ENCODE measurements at regions of chr6 and their contacts with region 1.

Region 1: DNA sequence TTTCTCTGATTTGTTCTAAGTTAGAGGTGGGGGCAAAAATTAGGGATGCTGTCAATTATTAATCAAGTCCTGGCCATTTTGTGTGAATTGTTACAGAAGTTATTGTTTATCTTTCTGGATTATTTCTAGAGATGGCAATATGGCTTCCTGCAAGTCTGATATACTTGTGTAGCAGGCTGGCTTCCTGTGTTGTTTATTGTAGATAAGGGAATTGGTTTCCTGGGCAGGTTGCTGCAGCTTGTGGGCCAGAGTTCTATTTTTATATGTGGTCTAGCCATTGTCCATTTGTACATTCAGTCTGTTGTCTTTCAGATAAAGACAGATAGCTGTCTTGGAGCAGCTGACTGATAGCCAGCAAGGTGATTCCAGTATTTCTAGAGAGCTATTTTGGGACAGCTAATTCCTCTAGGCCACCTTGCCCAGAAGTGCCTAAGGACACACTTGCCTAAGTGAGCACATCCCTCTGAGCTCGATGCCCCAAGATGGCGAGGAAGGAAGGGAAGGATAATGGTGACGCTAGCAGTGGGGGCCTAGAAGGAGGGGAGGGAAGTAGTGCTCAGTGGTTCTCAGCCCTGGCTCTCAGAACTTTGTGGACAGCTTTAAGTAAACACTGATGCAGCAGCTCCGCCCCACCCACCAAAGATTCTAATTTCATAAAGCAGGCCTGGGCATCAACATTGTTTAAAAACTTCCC is 25.5 kb downstream of the DDO start:
- DNase-seq: peak; percentile 74
- H3K4me3 ChIP-seq: no peak overlapping the region
- H3K27ac ChIP-seq: peak overlapping the region; percentile 54
- H3K4me1 ChIP-seq: peaks cover 17% of the 10 kb centered on the region
- H3K27me3 ChIP-seq: peaks cover 10 to 16% of the 10 kb centered on the region in 2 experiments
- CTCF ChIP-seq: no peak
- POLR2A ChIP-seq: no peak

Region 2: DNA sequence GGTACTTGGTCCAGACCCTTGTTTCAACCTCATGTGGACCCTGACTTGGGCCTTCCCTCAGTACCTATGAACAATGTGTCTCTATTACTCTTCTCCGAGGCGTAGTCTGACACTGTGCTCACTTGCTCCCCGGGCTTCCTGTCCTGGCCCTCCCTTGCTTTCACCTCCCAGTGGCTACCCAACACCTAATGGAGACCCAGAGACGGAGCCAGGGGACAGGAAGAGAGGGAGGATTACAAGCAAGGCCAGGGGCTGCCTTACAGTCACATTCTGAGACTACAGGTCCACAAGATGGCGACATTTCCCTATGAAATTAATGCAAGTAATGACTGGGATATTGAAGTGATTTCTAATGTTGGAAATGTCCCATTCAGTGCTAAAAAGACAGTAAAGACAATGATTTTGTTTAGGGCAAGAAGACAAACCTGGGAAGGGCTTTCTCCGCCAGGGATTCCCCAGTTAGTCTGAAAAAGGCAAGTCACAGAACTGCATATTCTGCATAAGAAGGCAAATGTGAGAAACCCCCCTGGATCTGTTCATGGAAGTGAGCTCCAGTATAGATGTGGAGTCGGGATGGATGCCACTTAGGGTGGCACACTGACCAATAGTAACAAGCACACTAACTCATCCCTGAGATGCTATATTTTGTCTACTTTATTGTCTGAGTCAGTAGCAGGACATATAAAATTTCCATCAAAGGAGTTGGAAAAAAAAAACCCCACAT is 862.8 kb before region 1 on chr6:
- CTCF ChIA-PET with region 1: interaction called, 11 read pairs
- POLR2A ChIA-PET with region 1: no interaction called
- dilution Hi-C with region 1: no loop called
- intact Hi-C with region 1: loop called (anchors 2 kb)
- DNase-seq: peak; percentile 67
- H3K4me3 ChIP-seq: no peak overlapping the region
- H3K27ac ChIP-seq: no peak overlapping the region
- H3K4me1 ChIP-seq: no peaks in the 10 kb centered on the region
- H3K27me3 ChIP-seq: no peaks in the 10 kb centered on the region
- CTCF ChIP-seq: peak; percentile 45 to 60
- POLR2A ChIP-seq: no peak

Region 3: DNA sequence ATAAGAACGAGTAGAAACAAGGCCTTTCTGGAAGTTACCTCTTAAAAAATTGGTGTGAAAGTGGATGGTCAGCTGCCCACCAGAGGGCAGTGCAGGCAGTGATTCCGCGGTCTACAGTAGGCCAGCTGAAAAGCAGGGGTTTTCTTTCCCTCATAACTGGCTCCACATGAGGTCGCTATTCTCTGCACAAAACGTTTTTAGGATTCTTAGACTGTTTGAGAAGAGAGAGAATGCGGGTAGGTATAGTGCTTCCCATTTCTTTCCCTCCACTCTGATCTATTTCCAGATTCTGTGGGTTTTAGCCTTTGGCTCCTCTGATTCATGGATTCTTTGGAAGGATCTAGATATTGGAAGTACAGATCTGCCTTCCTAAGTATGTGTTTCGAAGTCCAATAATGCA is 684.6 kb before region 1 on chr6:
- CTCF ChIA-PET with region 1: interaction called, 61 read pairs
- POLR2A ChIA-PET with region 1: no interaction called
- dilution Hi-C with region 1: no loop called
- intact Hi-C with region 1: loop called (anchors 1 kb)
- DNase-seq: peak; percentile 90
- H3K4me3 ChIP-seq: no peak overlapping the region
- H3K27ac ChIP-seq: no peak overlapping the region
- H3K4me1 ChIP-seq: no peaks in the 10 kb centered on the region
- H3K27me3 ChIP-seq: no peaks in the 10 kb centered on the region
- CTCF ChIP-seq: peak; percentile 91 to 99
- POLR2A ChIP-seq: no peak

Region 4: DNA sequence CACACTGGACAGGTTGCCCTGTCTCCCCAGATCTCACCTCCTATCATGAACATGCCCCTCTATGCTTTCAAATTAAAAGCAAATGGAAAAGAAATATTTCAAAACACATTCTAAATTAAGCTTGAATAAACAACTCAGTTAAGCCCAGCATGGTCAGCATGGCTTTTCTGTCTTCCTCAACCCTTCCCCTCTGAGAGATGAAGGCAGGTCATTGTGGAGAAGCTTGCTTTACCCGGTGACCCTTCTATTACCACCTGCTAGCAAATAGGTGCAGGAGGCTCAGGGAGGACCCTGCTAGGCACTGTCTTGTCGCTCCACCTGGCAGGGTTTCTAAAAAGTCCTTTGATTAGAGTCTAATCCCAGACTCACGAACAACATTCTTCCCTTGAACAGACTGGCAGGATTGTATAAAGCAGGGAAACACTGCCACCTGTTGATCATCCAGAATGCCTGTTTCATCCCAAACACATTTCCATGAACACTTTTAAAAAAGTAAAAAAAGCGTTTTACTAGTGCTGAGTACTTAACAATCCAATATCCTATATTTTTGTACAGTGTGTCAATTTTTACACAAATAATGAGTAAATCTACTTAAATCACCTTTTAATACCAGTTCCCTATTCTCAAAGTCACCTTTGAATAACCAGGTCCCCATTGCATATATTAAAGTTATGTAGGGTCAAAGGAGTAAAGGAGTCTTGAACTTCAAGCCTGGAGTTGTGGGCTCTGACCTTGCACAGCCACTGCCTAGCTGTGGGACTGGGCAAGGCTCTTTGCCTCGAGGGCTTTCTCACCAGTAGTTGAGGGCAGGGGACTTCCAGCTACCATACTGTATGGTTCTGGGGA is 336.2 kb before region 1 on chr6:
- CTCF ChIA-PET with region 1: interaction called, 4 read pairs
- POLR2A ChIA-PET with region 1: no interaction called
- dilution Hi-C with region 1: no loop called
- intact Hi-C with region 1: loop called (anchors 1 kb)
- DNase-seq: peak; percentile 44
- H3K4me3 ChIP-seq: no peak overlapping the region
- H3K27ac ChIP-seq: no peak overlapping the region
- H3K4me1 ChIP-seq: no peaks in the 10 kb centered on the region
- H3K27me3 ChIP-seq: peaks cover 3 to 29% of the 10 kb centered on the region in 2 experiments
- CTCF ChIP-seq: peak; percentile 56 to 63
- POLR2A ChIP-seq: no peak

Region 5: GRCh38 chr6:110179401-110180227 is 210.2 kb before region 1 on chr6 and contains the start of gene WASF1:
- CTCF ChIA-PET with region 1: interaction called, 24 read pairs
- POLR2A ChIA-PET with region 1: no interaction called
- dilution Hi-C with region 1: no loop called
- intact Hi-C with region 1: loop called (anchors 1 kb)
- DNase-seq: peak; percentile 99
- H3K4me3 ChIP-seq: peak within 1 kb of the TSS; percentile 61 to 94 (median 92)
- H3K27ac ChIP-seq: peak within 1 kb of the TSS; percentile 87
- H3K4me1 ChIP-seq: peaks cover 30% of the 10 kb centered on the region
- H3K27me3 ChIP-seq: no peaks in the 10 kb centered on the region
- CTCF ChIP-seq: no peak
- POLR2A ChIP-seq: peak; percentile 63
- total RNA-seq, gene WASF1: 20.9 and 23.2 TPM in 2 replicates

Measured in endothelial cell of umbilical vein (primary cell).